Activated T-helper 1 cell treated with anti-CD3 and anti-CD28 coated beads, Interleukin-12 subunit alpha, Interleukin-12 subunit beta, Interleukin-2, Interleukin-4 antibody, amounts not matched to agents 30 ng/mL and 10 ng/mL and 1 ng/mL, durations not matched to agents 14 hours and 24 hours and 36 hours (primary cell): ENCODE measurements at regions of chr21 and their contacts with region 1.

Region 1: GRCh38 chr21:34154878-34155277 is 81.5 kb downstream of the MRPS6 start:
- DNase-seq: peak; percentile 47
- H3K4me3 Mint-ChIP-seq: no peak overlapping the region
- H3K27ac Mint-ChIP-seq: peak overlapping the region; percentile 86
- H3K4me1 Mint-ChIP-seq: peaks cover 53% of the 10 kb centered on the region
- H3K27me3 Mint-ChIP-seq: no peaks in the 10 kb centered on the region

Region 2: DNA sequence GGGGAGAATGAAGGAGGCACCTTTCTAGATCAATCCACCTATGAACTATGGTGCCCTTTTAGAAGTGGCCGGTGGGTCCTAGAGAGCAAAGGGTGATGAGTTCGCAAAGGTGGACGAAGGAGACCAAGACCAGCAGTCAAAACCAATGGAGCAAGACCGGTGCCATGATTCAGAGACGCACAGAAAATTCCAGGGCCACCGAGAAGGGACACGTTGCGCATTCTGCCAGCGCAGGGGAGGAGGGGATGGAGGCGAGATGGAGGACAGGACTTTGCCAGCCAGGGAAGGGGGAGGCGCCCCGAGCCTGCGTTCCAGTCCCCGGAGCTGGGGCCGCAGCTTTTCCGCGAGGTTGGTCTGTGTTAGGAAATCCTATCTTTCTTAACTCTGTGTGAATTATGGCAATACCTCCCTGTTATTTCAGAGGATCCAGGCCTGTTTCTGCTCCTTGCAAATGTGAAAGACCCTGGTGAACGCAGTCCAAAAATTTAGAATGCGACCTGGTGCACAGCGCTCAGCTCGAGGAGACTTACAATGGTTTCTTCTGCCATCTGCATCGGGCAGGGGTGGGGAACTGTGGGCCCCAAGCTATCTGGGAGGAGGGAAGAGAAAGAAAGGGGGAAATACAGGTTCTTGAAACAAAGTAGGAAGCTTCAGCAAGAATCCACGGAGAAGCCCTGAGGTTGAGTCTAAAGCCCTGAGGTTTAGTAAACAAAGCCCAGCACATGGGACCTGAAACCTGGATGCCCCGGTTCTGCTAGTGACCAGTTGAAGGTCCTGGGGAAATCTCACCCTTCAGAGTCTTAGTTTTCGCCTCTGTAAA is 47.9 kb after region 1 on chr21:
- intact Hi-C with region 1: loop called (anchors 2 kb)
- DNase-seq: no peak
- H3K4me3 Mint-ChIP-seq: no peak overlapping the region
- H3K27ac Mint-ChIP-seq: peak overlapping the region; percentile 48
- H3K4me1 Mint-ChIP-seq: peaks cover 71% of the 10 kb centered on the region
- H3K27me3 Mint-ChIP-seq: no peaks in the 10 kb centered on the region